ENCODE measurements at regions of chr11 and their contacts with region 1.

Region 1: GRCh38 chr11:62612366-62613290 is at the starts of genes EML3 and ROM1:
- DNase-seq: no peak
- ATAC-seq: peak; percentile 79
- H3K4me3 ChIP-seq: peak within 1 kb of the TSS; percentile 87 to 94
- H3K27ac ChIP-seq: peak within 1 kb of the TSS; percentile 83
- H3K4me1 ChIP-seq: peaks cover 28 to 45% of the 10 kb centered on the region in 2 experiments
- H3K27me3 ChIP-seq: no peaks in the 10 kb centered on the region
- CTCF ChIP-seq: peak; percentile 83 to 99 (median 97)
- POLR2A ChIP-seq: no peak
- RAD21 ChIP-seq: peak; percentile 47
- total RNA-seq, gene EML3: 124 TPM
- total RNA-seq, gene ROM1: 2.7 TPM

Region 2: DNA sequence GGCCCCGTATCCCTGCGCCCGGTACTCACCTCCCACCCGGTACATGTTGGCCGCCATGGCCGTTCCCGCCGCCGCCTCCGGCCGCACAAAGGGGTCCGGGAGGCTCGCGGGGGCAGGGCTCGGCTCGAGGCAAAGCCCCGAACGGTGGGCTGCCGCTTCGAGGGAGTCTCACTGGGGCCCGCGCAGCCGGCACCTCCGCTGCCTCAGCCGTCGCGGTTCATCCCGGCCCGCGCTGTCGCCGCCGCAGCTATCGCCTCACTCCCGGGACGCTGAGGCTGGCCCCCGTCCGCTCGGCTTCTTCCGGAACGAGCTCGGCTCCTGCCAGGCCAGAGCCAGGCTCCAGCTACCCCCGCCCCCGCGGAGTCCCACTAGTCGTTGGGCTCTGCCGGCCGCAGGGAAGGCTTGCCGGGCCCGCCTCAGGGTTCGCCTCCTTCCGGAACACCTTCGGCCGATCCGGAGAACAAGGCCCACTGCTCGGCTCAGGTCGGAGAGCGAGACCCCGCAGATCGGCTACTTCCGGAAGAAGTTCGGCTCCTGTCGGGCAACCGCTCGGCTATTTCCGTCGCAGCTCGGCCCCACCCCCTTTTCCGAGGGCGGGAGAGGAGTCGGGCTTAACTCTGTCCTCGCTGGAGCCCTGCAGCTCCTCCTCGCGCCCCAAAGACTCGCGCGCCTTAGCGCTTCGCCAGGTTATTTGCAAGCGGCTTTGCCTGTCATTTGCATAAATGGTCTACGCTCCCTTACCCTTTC is 11.1 kb before region 1 on chr11 and contains the start of gene MTA2:
- CTCF ChIA-PET with region 1: interaction called, 11 read pairs
- POLR2A ChIA-PET with region 1: interaction called, 6 read pairs
- RAD21 ChIA-PET with region 1: no interaction called
- intact Hi-C with region 1: no loop called
- DNase-seq: peak; percentile 95
- ATAC-seq: peak; percentile 87
- H3K4me3 ChIP-seq: peak within 1 kb of the TSS; percentile 92 to 94
- H3K27ac ChIP-seq: peak within 1 kb of the TSS; percentile 99
- H3K4me1 ChIP-seq: peaks cover 13 to 44% of the 10 kb centered on the region in 2 experiments
- H3K27me3 ChIP-seq: no peaks in the 10 kb centered on the region
- CTCF ChIP-seq: no peak
- POLR2A ChIP-seq: peak; percentile 20
- RAD21 ChIP-seq: no peak
- total RNA-seq, gene MTA2: 98.9 TPM

Region 3: GRCh38 chr11:62645956-62646824 is 33.6 kb after region 1 on chr11 and contains the start of gene GANAB:
- CTCF ChIA-PET with region 1: no interaction called
- POLR2A ChIA-PET with region 1: no interaction called
- RAD21 ChIA-PET with region 1: no interaction called
- intact Hi-C with region 1: loop called (anchors 5 kb)
- DNase-seq: peak; percentile 88
- ATAC-seq: peak; percentile 97
- H3K4me3 ChIP-seq: peak within 1 kb of the TSS; percentile 96 to 100
- H3K27ac ChIP-seq: peak within 1 kb of the TSS; percentile 92
- H3K4me1 ChIP-seq: peaks cover 5 to 20% of the 10 kb centered on the region in 2 experiments; a peak in 3 of 4 replicates
- H3K27me3 ChIP-seq: no peaks in the 10 kb centered on the region
- CTCF ChIP-seq: no peak
- POLR2A ChIP-seq: peak; percentile 83
- RAD21 ChIP-seq: no peak
- total RNA-seq, gene GANAB: 410 TPM

Measured in HCT116 (cell line).